Esophagus squamous epithelium (tissue), 5 donors: ENCODE measurements at regions of chr1 and their contacts with region 1.

Region 1: GRCh38 chr1:40668769-40669525 is 3.5 kb upstream of the RIMS3 start:
- DNase-seq: no peak
- H3K4me3 ChIP-seq: peak overlapping the region in 2 of 4 donors; percentile 26 to 49
- H3K27ac ChIP-seq: no peak overlapping the region
- H3K4me1 ChIP-seq: peaks cover 11 to 34% (median 12%) of the 10 kb centered on the region in 3 donors
- H3K27me3 ChIP-seq: no peaks in the 10 kb centered on the region
- CTCF ChIP-seq: peak; percentile 89 to 98 (median 92)
- POLR2A ChIP-seq: no peak

Region 2: GRCh38 chr1:40612345-40612831 is 56.6 kb before region 1 on chr1:
- intact Hi-C with region 1: loop called (anchors 10 kb)
- DNase-seq: no peak
- H3K4me3 ChIP-seq: no peak overlapping the region
- H3K27ac ChIP-seq: no peak overlapping the region
- H3K4me1 ChIP-seq: peaks cover 4 to 7% (median 5%) of the 10 kb centered on the region in 3 donors
- H3K27me3 ChIP-seq: no peaks in the 10 kb centered on the region
- CTCF ChIP-seq: peak; percentile 43 to 85 (median 74)
- POLR2A ChIP-seq: no peak